Right lobe of liver (tissue), 6 donors: ENCODE measurements at regions of chr12 and their contacts with region 1.

Region 1: GRCh38 chr12:63994704-63995103 is 150.2 kb downstream of the SRGAP1 start:
- DNase-seq: no peak
- ATAC-seq: peak in 1 of 4 donors; percentile 35
- H3K4me3 ChIP-seq: no peak overlapping the region
- H3K27ac ChIP-seq: no peak overlapping the region
- H3K4me1 ChIP-seq: no peaks in the 10 kb centered on the region
- H3K27me3 ChIP-seq: no peaks in the 10 kb centered on the region
- CTCF ChIP-seq: no peak
- POLR2A ChIP-seq: no peak

Region 2: DNA sequence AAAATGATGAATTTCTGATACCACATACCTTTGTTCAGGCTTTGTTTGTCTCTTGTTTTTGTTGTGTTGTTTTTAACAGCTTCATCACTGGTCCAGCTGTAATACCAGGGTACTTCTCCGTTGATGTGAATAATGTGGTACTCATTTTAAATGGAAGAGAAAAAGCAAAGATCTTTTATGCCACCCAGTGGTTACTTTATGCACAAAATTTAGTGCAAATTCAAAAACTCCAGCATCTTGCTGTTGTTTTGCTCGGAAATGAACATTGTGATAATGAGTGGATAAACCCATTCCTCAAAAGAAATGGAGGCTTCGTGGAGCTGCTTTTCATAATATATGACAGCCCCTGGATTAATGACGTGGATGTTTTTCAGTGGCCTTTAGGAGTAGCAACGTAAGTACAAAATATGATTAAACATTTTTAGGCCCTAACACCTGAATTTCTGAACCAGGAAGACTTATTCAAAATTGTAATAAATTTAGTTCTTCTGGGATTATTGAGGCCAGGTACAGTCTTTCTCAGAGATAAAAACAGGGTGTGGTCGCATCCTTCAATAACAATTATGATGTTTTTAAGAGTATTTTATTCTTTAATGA is 192.6 kb before region 1 on chr12:
- intact Hi-C with region 1: no loop called
- DNase-seq: no peak
- ATAC-seq: peak; percentile 38 to 61 (median 54)
- H3K4me3 ChIP-seq: no peak overlapping the region
- H3K27ac ChIP-seq: no peak overlapping the region
- H3K4me1 ChIP-seq: peaks cover 0 to 10% (median 5%) of the 10 kb centered on the region in 4 donors
- H3K27me3 ChIP-seq: no peaks in the 10 kb centered on the region
- CTCF ChIP-seq: peak; percentile 55 to 61 (median 58)
- POLR2A ChIP-seq: no peak

Region 3: DNA sequence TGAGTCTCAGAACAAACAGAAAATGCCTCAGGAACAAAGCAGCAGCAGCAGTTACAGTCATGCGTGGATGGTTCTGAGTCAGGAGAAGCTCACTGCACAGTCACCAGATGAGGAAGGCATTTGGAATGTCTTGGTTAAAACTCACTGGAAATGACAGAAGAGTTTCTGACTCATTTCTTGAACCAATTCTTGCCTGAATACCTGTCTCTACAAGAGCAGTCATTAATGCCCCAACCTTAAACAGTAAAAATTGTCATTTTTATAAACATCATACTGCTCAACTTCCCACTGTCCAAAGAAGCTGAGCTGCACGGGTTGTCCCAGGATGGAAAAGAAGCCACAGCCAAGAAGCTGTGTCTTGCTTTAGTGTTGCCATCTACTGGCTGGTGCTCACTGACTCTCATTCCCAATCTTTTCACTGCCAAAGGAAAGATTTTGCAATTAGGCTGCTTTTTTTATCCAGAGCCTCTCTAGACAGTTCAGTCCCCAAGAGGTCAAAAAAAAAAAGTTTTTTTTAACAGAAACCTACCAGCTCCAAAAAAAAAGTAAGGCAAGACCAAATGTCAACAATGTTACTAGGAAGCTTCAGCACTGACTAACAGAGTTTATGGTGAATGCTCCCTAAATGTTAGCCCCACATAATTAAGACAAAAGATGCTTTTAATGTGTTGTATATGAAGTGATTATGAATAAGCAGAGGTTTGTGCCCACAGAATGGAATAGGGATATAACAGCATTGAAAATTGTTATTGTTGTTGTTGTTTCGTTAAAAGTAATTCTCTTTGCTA is 187.0 kb after region 1 on chr12:
- intact Hi-C with region 1: loop called in 1 of 2 experiments (anchors 5 kb)
- DNase-seq: peak in 1 of 3 donors; percentile 61
- ATAC-seq: peak; percentile 91 to 96 (median 93)
- H3K4me3 ChIP-seq: no peak overlapping the region
- H3K27ac ChIP-seq: peak overlapping the region in 1 of 3 donors; percentile 34
- H3K4me1 ChIP-seq: peaks cover 0 to 4% (median 0%) of the 10 kb centered on the region in 4 donors
- H3K27me3 ChIP-seq: no peaks in the 10 kb centered on the region
- CTCF ChIP-seq: peak; percentile 60 to 73 (median 69)
- POLR2A ChIP-seq: no peak